AG04449 (cell line): ENCODE measurements at regions of chr1 and their contacts with region 1.

Region 1: DNA sequence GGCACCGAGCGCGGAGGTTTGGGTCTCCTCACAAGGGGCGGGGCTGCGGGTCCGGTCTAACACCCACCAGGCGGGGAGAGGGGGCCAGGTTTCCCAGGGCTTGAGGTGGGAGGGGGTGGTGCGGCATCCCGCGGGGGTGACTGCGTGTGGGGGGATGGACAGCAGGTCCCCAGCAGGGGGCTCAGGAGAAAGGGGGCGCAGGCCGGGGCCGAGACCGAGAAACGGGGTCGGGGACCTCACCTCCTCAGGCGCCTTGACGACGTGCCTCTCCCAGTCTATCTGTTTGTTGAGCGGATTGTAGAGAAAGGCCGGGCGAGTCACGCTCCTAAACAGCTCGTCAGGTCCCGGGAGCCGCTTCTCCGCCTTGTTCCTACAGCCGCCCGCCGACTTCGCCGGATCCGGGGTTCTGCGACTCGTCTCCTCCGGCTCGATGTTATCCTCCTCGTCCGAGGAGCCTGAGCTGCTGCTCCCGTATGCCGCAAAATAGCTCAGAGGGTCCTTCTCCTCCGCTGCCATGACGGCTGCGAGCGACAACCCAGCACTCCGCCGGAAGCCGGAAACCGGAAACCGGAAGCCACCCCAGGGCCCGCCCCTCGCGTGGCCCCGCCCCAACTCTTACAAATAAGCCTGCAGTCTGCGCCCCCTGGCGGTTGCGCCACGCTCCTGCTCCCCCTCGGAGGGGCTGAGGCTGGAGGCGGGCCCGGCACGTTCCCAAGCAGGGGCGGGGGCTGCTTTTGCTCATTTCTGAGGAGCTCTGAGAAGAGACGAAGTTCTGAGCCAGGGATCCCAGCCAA is at the start of gene C1orf52:
- DNase-seq: peak; percentile 62
- H3K4me3 ChIP-seq: peak within 1 kb of the TSS; percentile 93
- CTCF ChIP-seq: peak; percentile 98

Region 2: DNA sequence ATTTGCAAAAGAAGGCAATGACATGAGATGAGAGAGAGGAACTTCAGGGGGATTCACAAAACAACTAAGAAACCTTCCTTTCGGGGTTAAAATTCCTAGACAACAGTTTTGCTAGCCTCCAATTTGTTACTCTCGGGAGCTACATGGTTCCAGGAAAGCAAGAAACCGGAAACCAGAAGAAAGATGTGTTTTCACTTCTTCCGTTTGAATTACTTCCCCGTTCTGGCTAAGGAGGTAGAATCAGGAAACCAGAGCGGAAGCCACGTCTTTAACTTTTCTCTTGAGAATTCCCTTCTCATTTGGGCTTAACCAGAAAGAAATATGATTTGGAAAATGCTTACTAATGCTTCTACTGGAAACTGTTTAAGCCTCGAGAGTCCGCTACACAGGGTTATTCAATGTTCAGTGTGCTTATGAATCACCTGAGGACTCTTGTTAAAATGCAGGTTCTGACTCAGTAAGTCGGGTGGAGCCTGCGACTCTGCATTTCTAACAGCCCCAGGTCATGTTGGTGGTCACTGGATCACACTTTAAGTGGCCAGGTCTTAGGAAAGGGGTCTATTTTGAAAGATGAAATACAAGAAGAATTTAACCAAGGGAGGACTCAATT is 167.5 kb before region 1 on chr1:
- CTCF ChIA-PET with region 1: interaction called, 20 read pairs
- POLR2A ChIA-PET with region 1: no interaction called
- DNase-seq: no peak
- H3K4me3 ChIP-seq: no peak overlapping the region
- CTCF ChIP-seq: no peak

Region 3: GRCh38 chr1:85128341-85128740 is 131.0 kb before region 1 on chr1:
- CTCF ChIA-PET with region 1: interaction called, 23 read pairs
- POLR2A ChIA-PET with region 1: no interaction called
- DNase-seq: no peak
- H3K4me3 ChIP-seq: no peak overlapping the region
- CTCF ChIP-seq: no peak

Region 4: DNA sequence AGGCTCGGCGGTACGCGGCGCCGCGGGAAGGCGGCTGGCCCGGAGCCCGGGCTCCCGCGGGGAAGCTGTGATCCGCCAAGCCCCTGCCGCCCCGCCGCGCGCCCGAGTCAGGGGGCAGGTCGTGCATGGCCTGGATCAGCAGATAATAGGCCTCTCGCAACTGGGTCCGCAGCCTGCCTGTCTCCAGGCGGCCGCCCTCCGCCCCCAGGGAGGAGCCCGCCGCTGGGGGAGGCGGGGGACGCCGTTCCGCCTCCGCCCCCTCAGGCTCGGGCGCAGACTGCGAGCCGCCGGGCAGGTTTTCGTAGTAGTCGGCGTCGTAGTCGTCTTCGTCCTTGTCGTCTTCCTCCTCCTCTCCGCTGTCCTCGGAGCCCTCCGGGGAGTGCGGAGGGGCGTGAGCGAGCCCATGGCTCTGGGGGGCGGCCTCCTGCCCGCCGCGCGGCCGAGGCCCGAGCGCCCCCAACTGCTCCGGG is 58.4 kb before region 1 on chr1 and contains the start of gene SYDE2:
- CTCF ChIA-PET with region 1: interaction called, 12 read pairs
- POLR2A ChIA-PET with region 1: no interaction called
- DNase-seq: no peak
- H3K4me3 ChIP-seq: peak within 1 kb of the TSS; percentile 82
- CTCF ChIP-seq: no peak

Region 5: GRCh38 chr1:85240174-85240601 is 19.1 kb before region 1 on chr1:
- CTCF ChIA-PET with region 1: interaction called, 47 read pairs
- POLR2A ChIA-PET with region 1: no interaction called
- DNase-seq: no peak
- H3K4me3 ChIP-seq: no peak overlapping the region
- CTCF ChIP-seq: no peak